ENCODE measurements at regions of chr7 and their contacts with region 1.

Region 1: GRCh38 chr7:65974191-65974801 is 7.7 kb downstream of the GUSB start:
- DNase-seq: peak in 1 of 2 donors; percentile 57
- H3K4me3 ChIP-seq: no peak overlapping the region
- H3K27ac ChIP-seq: no peak overlapping the region
- H3K4me1 ChIP-seq: no peaks in the 10 kb centered on the region
- H3K27me3 ChIP-seq: no peaks in the 10 kb centered on the region
- CTCF ChIP-seq: no peak

Region 2: DNA sequence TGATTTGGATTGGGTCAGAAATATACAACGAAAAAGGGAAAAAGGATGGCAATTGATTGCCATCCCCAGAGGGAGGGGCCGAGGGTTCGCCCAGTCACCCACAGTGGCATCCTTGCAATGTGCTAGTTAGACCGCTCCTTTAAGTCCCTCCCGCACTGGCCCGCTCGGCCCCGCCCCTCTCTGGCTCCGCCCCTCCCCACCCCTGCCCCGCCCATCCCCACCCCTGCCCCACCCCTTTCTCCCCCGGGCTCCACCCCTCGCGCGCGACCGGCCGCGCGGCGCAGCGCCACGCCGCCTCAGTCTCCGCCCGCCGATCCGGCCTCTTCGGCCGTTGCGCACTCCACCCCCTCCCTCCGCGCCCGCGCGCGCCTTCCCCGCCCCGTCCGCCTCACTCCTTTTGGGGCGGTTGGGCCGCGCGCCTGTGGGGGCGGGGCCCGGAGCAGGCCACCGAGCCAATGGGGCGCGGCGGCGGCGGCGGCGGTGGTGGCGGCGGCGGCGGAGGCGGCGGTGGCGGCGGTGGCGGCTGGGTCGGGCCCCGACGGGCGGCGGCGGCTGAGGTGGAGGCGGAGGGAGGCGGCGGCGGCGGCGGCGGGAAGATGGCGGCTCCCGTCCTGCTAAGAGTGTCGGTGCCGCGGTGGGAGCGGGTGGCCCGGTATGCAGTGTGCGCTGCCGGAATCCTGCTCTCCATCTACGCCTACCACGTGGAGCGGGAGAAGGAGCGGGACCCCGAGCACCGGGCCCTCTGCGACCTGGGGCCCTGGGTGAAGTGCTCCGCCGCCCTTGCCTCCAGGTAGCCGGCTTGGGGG is 101.3 kb before region 1 on chr7 and contains the start of gene VKORC1L1:
- intact Hi-C with region 1: loop called (anchors 10 kb)
- DNase-seq: peak; percentile 92 to 98
- H3K4me3 ChIP-seq: peak within 1 kb of the TSS; percentile 76 to 97
- H3K27ac ChIP-seq: peak within 1 kb of the TSS; percentile 70 to 86
- H3K4me1 ChIP-seq: peaks cover 0 to 17% (median 5%) of the 10 kb centered on the region in 4 donors
- H3K27me3 ChIP-seq: no peaks in the 10 kb centered on the region
- CTCF ChIP-seq: no peak